ENCODE measurements at regions of chr2 and their contacts with region 1.

Region 1: DNA sequence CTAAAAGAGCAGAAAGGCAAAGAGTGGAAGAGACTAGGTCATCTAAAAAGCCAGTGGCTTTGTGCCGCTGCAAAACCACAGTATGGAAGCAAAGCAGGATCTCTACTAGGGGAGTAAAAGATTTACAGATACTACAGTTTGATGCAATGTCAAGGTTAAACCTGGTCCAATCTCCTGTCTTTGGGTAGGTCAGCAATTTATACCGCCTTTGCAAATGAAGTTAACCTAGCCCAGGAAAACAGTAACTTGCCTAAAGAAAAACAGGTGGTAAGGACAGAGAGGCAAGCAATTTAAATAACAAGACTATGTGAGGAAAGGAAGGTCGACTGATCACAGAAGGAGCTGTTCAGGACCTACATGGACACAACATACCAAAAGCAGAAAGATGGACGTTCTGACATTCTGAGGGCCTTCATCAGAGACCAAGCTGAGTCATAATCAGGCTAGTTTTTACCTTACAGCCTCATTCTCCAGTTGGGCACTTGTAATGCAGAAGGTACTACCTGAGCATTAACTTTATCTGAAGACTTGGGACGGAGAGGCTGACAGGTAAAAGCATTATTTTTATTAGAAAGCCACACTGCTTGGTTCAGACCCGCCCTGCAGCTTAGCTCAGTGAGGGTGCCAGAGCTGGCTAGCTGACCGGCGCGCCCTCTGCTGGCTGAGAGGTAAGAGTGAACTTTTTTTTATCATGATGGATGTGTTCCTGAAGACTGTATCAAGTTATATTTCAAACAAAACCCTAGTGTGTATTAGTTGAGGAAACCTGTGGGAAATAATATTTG is 15.9 kb downstream of the CDKL4 start:
- DNase-seq: peak; percentile 85
- H3K4me3 ChIP-seq: peak overlapping the region; percentile 46
- H3K27ac ChIP-seq: no peak overlapping the region
- H3K4me1 ChIP-seq: no peaks in the 10 kb centered on the region
- H3K27me3 ChIP-seq: no peaks in the 10 kb centered on the region

Region 2: DNA sequence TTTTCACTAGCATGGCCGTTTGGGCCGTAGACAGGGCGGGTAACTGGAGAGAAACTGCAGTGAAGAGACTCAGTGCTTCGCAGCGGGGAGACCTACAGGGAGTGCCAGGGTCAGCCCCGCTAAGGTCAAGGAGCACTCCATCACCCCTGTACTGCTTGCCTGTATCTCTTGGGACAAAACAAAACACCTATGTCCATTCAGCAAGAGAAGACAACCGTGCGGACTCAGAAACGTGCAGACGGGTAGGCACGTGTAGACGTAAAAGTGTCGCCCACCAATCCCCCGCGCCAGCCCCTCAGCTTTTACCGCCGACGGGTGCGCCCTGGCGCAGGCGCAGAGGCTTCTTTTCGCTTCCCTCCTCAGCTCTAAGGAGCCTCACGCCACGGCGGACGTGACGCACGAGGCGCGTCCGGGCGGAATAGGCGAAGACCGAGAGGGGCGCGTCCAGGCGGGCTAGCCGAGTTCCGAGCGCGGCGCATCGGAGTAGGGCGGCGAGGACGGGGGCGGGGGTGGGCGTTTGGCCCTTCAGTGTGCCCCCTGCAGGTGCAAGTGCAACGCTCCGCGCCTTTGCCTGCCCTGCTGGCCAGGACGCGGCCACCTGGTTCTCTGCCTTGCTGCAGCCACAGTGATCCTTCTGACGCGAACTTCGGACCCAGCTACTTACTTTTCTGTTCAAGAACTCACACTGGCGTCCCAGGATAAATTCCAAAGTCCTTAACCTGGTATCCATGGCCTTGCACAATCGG is 103.6 kb before region 1 on chr2:
- in situ Hi-C with region 1: loop called (anchors 10 kb)
- DNase-seq: peak; percentile 99
- H3K4me3 ChIP-seq: peak overlapping the region; percentile 91
- H3K27ac ChIP-seq: peak overlapping the region; percentile 76
- H3K4me1 ChIP-seq: peaks cover 28% of the 10 kb centered on the region
- H3K27me3 ChIP-seq: no peaks in the 10 kb centered on the region